Esophagus muscularis mucosa (tissue), 4 donors: ENCODE measurements at regions of chr4 and their contacts with region 1.

Region 1: GRCh38 chr4:182144626-182145333 is 98.4 kb upstream of the TENM3 start:
- DNase-seq: no peak
- H3K4me3 ChIP-seq: peak overlapping the region; percentile 69 to 80 (median 75)
- H3K27ac ChIP-seq: peak overlapping the region; percentile 68 to 86 (median 78)
- H3K4me1 ChIP-seq: peaks cover 23 to 40% (median 30%) of the 10 kb centered on the region in 4 donors
- H3K27me3 ChIP-seq: peaks cover 0 to 52% (median 6%) of the 10 kb centered on the region in 4 donors
- CTCF ChIP-seq: no peak
- EP300 ChIP-seq: no peak
- POLR2A ChIP-seq: no peak

Region 2: DNA sequence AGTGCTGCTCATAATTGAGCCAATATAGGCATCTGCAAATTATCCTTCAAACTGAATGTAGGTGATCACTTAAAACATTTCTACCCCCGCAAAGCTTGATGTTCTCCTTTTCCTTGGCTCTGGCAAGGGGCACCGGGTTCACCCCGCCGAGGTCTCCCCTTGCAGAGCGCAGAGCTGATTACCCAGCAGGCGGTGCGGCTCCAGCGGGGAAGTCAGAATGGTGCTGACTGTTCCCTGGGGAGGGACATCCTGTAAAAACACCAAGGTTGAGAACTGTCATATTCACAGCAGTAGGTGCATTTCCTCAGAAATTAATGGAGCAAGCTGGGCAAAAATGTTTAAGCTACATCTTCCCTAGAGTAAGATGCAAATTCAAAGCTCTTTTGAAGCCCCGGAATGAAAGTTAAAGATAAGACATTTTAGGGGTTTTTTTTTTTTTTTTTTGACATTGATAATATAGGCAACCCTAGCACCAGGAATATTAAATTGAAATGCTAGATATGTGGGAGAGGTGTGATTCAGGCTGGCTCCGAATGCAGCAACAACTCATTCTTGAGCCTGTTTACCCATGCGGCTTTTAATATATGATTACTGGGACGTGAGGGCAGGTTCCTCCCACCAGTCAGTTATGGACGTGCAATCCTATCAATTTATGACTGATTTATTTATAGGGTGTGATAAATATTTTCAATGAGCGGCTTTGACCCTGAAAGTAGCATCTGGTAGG is 668.8 kb before region 1 on chr4:
- intact Hi-C with region 1: no loop called
- DNase-seq: no peak
- H3K4me3 ChIP-seq: no peak overlapping the region
- H3K27ac ChIP-seq: no peak overlapping the region
- H3K4me1 ChIP-seq: no peaks in the 10 kb centered on the region
- H3K27me3 ChIP-seq: no peaks in the 10 kb centered on the region
- CTCF ChIP-seq: no peak
- EP300 ChIP-seq: no peak
- POLR2A ChIP-seq: no peak

Region 3: DNA sequence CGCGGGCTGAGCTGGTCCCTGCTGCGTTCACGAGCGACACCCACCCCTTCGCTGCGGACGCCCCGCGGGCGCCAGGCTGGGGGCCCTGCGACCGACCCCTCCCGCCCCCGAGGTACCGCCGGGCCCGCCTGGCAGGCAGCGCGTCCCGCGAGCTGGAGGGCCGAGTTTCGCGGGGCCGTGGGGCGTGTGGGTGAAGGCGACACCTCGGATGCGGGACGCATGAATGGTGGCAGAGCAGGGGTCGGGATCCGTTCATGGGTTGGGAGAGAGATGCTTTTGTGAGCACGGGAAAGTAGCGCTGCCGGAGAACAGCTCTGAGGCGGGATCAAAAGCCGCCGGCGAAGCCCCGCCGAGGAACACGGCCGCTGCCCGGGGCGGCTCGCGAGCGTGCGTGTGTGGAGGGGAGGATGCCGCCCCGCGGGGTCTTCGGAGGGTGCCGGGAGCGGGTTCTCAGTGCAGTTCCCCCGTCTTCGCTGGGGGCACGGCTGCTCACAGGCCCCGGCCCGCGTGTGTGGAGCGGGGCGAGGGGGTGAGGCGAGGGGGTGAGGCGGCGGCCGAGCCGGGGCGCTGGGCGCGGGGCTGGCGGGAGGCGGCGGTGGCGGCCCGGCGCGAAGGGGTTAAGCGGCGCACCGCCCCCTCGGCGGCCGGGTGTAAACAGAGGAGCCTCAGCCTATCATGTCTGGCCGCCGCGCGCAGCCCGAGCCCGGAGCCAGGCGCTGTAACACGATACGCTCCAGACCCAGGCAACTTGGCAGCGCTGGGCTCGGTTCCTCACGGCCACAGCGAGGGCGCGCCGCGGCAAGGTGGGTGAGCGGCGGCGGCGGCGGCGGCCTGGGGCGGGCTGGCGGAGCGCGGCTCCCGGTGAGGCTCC is 303.7 kb after region 1 on chr4:
- intact Hi-C with region 1: loop called (anchors 5 kb)
- DNase-seq: no peak
- H3K4me3 ChIP-seq: peak overlapping the region; percentile 63 to 94 (median 89)
- H3K27ac ChIP-seq: peak overlapping the region; percentile 77 to 88 (median 80)
- H3K4me1 ChIP-seq: peaks cover 8 to 37% (median 29%) of the 10 kb centered on the region in 4 donors
- H3K27me3 ChIP-seq: peaks cover 0 to 19% (median 0%) of the 10 kb centered on the region in 4 donors
- CTCF ChIP-seq: peak in 1 of 3 experiments; percentile 10
- EP300 ChIP-seq: no peak
- POLR2A ChIP-seq: no peak